OCI-LY7 (cell line): ENCODE measurements at regions of chrX and their contacts with region 1.

Region 1: GRCh38 chrX:7147978-7148824 is at the start of gene PUDP:
- DNase-seq: peak; percentile 87
- H3K4me3 ChIP-seq: peak within 1 kb of the TSS; percentile 95
- H3K27ac ChIP-seq: peak within 1 kb of the TSS; percentile 87
- H3K4me1 ChIP-seq: peaks cover 33% of the 10 kb centered on the region
- CTCF ChIP-seq: peak; percentile 41
- total RNA-seq, gene PUDP: 8.8 and 21.1 TPM in 2 replicates

Region 2: DNA sequence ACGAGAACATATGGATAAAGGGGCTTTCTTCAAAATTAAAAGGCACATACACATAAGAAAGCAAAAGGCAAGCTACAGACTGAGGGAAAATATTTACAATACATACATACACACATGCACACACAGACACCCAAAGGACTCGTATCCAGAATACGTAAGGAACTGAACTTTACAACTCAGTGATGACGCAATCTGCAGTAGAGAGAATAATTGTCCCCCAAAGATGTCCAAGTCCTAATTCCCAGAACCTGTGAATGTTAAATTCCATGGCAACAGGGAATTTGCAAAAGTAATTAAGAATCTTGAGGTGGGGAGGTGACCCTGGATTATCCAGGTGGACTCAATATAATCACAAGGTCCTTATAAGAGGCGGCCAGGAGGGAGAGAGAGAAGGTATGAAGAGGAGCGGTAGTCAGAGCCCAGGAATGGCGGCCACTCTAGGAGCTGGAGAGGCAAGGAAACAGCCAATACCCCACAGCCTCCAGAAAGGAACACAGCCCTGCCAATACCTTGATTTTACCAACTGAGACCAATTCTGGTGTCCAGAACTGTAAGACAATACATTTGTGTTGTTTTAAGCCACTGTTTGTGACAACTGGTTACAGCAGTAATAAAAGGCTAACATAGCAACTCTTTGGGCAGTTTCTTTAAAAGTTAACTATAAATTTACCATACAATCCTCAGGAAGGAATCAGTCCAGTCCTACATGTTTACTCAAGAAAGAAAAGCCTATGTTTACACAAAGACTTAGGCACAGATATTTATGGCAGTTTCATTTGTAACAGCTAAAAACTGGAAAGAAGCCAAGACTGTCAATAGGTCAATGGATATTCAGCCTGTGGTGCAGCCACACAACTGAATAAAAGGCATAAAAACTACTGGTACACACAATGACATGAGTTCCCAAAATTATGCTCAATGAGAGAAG is 28.0 kb before region 1 on chrX:
- CTCF ChIA-PET with region 1: no interaction called
- POLR2A ChIA-PET with region 1: interaction called, 12 read pairs
- intact Hi-C with region 1: no loop called
- DNase-seq: no peak
- H3K4me3 ChIP-seq: no peak overlapping the region
- H3K27ac ChIP-seq: peak overlapping the region; percentile 85
- H3K4me1 ChIP-seq: peaks cover 91% of the 10 kb centered on the region
- CTCF ChIP-seq: no peak

Region 3: GRCh38 chrX:7132335-7133049 is 15.7 kb before region 1 on chrX:
- CTCF ChIA-PET with region 1: interaction called, 6 read pairs
- POLR2A ChIA-PET with region 1: interaction called, 38 read pairs
- intact Hi-C with region 1: no loop called
- DNase-seq: peak; percentile 69
- H3K4me3 ChIP-seq: peak overlapping the region; percentile 50
- H3K27ac ChIP-seq: peak overlapping the region; percentile 84
- H3K4me1 ChIP-seq: peaks cover 50% of the 10 kb centered on the region
- CTCF ChIP-seq: peak; percentile 77

Region 4: GRCh38 chrX:7225338-7225737 is 77.1 kb after region 1 on chrX:
- CTCF ChIA-PET with region 1: no interaction called
- POLR2A ChIA-PET with region 1: interaction called, 4 read pairs
- intact Hi-C with region 1: loop called (anchors 5 kb)
- DNase-seq: no peak
- H3K4me3 ChIP-seq: peak overlapping the region; percentile 85
- H3K27ac ChIP-seq: peak overlapping the region; percentile 90
- H3K4me1 ChIP-seq: peaks cover 85% of the 10 kb centered on the region
- CTCF ChIP-seq: no peak